ENCODE measurements at regions of chr1 and their contacts with region 1.

Region 1: GRCh38 chr1:84433258-84434080 is 35.2 kb downstream of the DNASE2B start:
- DNase-seq: peak in 1 of 2 donors; percentile 53
- ATAC-seq: peak in 7 of 8 donors; percentile 63 to 85 (median 74)
- H3K4me3 ChIP-seq: peak overlapping the region in 8 of 10 donors; percentile 4 to 43 (median 34)
- H3K27ac ChIP-seq: peak overlapping the region in 1 of 10 donors; percentile 1
- H3K4me1 ChIP-seq: peaks cover 0 to 41% (median 6%) of the 10 kb centered on the region in 9 donors
- H3K27me3 ChIP-seq: no peaks in the 10 kb centered on the region
- CTCF ChIP-seq: peak; percentile 35 to 83 (median 79)

Region 2: DNA sequence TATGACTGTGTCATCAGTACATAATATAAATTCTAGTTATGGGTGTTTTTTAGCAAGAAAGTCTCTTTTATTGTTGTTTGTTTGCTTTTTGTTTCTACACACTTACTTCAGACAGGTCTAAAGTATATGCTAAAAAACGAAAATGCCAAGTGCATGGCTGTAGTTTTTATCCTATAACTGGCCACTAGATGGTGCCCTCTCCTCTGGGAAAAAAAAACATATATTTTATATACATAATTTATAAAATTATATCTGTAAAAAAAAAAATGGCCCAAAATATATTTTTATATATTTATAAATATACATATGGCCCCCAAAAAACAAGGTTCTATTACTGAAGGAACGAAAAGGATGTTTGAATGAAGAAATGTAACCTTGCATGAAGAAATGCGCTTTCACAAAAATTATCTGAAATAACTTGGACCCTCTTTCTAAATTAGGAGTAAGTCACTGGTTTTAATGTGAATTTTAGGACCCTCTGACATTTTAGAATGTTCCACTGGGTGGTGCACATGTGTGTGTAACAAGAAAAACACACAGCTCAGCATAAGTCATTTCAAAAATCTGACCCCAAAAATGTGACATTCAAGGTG is 528.1 kb before region 1 on chr1:
- intact Hi-C with region 1: loop called in 1 of 10 experiments (anchors 10 kb)
- DNase-seq: no peak
- ATAC-seq: no peak
- H3K4me3 ChIP-seq: no peak overlapping the region
- H3K27ac ChIP-seq: no peak overlapping the region
- H3K4me1 ChIP-seq: peaks cover 0 to under 1% (median 0%) of the 10 kb centered on the region in 9 donors
- H3K27me3 ChIP-seq: no peaks in the 10 kb centered on the region
- CTCF ChIP-seq: peak; percentile 28 to 80 (median 69)

Region 3: DNA sequence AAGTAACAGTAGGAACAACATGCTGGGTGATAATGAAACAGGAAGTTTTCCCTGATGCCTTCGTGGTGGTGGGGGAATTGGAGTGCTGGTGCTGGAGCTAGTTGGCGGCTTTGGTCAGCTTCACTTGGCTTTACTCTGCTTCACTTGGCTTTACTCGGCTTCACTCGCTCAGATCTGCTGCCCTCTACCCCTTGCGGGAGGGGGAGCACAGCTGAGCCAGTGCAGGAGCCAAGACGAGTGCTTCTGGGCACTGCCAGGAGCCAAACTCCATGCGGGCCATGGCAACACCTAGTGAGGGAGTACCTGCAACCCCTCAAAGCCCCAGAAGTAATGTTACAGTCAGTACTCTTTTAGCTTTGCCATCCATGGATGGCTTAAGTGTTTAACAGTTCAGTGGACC is 300.0 kb before region 1 on chr1:
- intact Hi-C with region 1: loop called in 2 of 10 experiments (anchors 5 to 10 kb)
- DNase-seq: no peak
- ATAC-seq: no peak
- H3K4me3 ChIP-seq: no peak overlapping the region
- H3K27ac ChIP-seq: no peak overlapping the region
- H3K4me1 ChIP-seq: no peaks in the 10 kb centered on the region
- H3K27me3 ChIP-seq: no peaks in the 10 kb centered on the region
- CTCF ChIP-seq: no peak

Region 4: GRCh38 chr1:84298328-84298683 is 135.2 kb before region 1 on chr1:
- intact Hi-C with region 1: loop called in 2 of 10 experiments (anchors 1 to 10 kb)
- DNase-seq: peak; percentile 45 to 66
- ATAC-seq: peak; percentile 82 to 93 (median 88)
- H3K4me3 ChIP-seq: peak overlapping the region; percentile 52 to 93 (median 87)
- H3K27ac ChIP-seq: peak overlapping the region; percentile 9 to 93 (median 88)
- H3K4me1 ChIP-seq: peaks cover 4 to 49% (median 31%) of the 10 kb centered on the region in 9 donors
- H3K27me3 ChIP-seq: no peaks in the 10 kb centered on the region
- CTCF ChIP-seq: no peak

Region 5: DNA sequence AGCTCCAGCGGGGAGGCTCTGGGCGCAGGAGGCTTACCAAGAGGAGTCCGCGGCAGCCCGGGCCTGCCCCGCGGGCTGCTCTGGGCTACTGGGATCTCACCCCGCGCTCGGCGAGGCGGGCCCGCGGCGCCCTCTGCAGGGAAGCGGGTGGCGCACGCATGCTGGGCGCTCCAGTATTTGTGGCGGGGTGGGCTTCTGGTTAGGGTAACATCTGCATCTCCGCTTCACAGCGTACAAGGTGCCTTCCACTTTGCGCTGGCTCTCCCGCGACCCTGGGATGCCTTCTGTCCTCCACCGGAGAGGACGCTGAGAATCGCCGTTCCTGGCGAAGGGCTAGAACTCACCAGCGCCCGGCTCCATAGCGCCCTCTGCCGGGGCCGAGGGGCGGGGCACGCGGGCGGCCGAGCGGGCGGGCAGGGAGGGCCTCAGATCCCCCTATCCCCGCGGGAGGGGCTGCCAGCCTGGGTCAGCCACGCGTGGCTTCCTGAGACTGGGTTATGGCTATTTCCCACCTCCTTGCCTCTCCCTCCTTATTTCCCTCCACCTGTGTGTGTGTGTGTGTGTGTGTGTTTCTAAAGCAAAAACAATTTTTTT is 187.3 kb after region 1 on chr1:
- intact Hi-C with region 1: loop called in 2 of 10 experiments (anchors 5 kb)
- DNase-seq: peak; percentile 65 to 79
- ATAC-seq: peak; percentile 93 to 97 (median 94)
- H3K4me3 ChIP-seq: peak overlapping the region; percentile 39 to 84 (median 67)
- H3K27ac ChIP-seq: peak overlapping the region in 7 of 10 donors; percentile 14 to 80 (median 59)
- H3K4me1 ChIP-seq: peaks cover 0 to 26% (median 5%) of the 10 kb centered on the region in 9 donors
- H3K27me3 ChIP-seq: no peaks in the 10 kb centered on the region
- CTCF ChIP-seq: peak; percentile 93 to 99 (median 97)

Region 6: GRCh38 chr1:84772428-84772943 is 339.0 kb after region 1 on chr1:
- intact Hi-C with region 1: loop called in 2 of 10 experiments (anchors 10 kb)
- DNase-seq: peak; percentile 71 to 78
- ATAC-seq: peak; percentile 75 to 91 (median 86)
- H3K4me3 ChIP-seq: no peak overlapping the region
- H3K27ac ChIP-seq: no peak overlapping the region
- H3K4me1 ChIP-seq: no peaks in the 10 kb centered on the region
- H3K27me3 ChIP-seq: no peaks in the 10 kb centered on the region
- CTCF ChIP-seq: peak; percentile 86 to 97 (median 93)

Measured in heart right ventricle (tissue), 16 donors.